ENCODE measurements at regions of chr1 and their contacts with region 1.

Region 1: DNA sequence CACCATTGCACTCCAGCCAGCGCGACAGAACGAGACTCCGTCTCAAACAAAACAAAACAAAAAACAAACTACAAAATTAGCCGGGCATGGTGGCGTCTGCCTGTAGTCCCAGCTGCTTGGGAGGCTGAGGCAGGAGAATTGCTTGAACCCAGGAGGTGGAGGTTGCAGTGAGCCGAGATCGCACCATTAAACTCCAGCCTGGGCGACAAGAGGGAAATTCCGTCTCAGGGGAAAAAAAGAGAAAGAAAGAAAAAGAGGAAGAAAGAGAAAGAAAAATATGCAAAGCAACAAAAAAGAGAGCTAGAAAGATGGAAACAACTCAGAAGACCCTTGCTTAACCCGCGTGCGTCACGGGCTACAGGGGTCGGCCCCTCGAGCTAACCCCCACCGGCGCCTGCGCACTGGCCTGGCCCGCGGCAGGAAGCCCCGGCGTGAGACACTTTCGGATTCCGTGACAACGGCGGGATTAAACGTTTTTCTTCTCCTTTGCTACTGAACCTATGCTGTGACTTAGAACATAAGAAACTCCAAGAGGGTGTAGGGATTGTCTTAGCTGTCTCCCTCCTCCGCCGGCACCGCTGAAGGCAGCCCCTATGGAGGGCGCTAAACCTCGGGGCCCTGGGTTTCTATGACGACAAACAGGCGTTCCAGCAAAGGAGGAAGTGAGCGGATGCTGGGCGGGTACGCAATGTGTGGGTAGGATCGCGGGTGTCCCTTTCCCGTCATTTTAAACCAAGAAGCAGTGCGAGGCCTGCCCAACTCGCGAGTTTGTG is at the start of gene AXDND1:
- DNase-seq: peak; percentile 96
- H3K4me3 Mint-ChIP-seq: peak within 1 kb of the TSS; percentile 96
- H3K27ac Mint-ChIP-seq: peak within 1 kb of the TSS; percentile 97
- H3K4me1 Mint-ChIP-seq: peaks cover 9% of the 10 kb centered on the region
- H3K27me3 Mint-ChIP-seq: peaks cover 4% of the 10 kb centered on the region
- total RNA-seq, gene AXDND1: 0.21 TPM in 1 of 2 replicates, not detected in the other

Region 2: DNA sequence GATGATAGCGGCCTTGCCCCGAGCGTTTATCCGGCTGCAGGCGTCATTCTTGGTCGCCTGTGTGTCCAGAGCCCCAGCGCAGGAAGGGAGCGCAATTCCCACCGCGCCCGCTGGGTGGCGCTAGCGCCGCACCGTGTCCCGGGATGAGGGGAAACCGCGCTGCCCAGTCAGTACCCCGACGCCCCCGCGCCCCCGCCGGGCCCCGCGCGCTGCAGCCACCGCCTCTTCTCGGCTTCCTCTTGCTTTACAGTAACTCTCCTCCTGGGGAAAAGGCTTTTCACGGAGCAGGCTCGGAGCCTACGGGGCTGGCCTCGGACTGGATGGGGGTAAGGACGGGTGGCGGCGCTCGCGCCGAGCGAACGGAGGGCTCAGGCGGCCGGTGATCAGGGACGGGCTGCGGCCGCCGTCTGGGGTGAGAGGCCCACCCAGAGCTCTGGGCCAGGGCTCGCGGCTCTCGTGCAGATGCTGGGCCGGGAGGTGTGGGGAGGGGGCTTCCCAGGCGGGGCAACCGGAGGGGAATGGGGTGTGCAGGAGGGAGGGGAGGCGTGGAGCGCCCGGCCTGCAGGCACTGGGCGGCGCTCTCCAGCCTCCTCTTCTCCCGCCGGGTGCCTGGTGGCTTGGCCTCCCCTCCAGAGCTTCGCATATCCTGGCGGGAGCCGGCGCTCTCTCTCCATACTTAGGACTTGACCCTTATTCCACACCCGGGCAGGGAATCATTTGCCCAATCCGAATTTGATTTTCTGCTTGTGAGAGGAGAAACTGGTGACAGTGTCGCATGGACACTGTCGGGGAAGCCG is 822.7 kb before region 1 on chr1:
- intact Hi-C with region 1: loop called (anchors 5 kb)
- DNase-seq: peak; percentile 97
- H3K4me3 Mint-ChIP-seq: peak overlapping the region; percentile 91
- H3K27ac Mint-ChIP-seq: peak overlapping the region; percentile 87
- H3K4me1 Mint-ChIP-seq: no peaks in the 10 kb centered on the region
- H3K27me3 Mint-ChIP-seq: no peaks in the 10 kb centered on the region

Region 3: DNA sequence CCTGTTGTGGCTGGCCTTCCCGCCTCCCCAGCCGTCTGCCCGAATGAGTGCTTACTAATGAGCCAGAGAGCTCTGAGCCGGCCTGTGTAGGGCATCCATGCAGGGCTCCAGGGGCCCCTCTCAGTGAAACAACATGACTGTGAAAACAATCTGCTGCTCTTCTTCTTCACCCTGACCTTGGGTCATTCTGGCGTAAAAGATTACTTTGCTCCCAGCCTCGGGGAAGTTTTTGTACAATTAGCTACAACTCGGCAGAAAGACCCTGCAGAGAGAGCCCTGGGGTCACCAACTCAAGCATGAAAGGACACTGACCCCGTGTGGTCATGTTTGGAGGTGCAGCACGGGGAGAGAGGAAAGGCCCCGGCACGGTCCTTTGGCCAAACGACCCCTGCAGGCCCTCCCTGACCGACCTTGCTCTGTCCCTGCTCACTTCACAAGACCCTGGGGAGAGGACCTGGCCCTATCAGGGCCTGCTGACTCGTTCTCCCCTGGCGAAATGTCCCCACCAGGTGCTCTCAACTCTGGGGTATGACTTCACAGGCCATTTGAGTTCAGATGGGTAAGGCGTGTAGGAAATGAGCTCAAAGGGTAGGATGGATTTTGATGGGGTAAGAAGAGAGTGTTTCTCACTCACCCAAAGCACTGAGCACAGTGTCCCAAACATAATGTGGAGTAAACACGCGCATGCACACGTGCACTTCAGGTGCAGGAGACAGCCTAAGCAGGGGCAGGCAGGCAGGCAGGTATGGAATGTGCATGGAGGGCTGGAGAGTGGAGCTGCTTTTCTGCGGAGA is 362.8 kb before region 1 on chr1:
- intact Hi-C with region 1: loop called (anchors 10 kb)
- DNase-seq: peak; percentile 90
- H3K4me3 Mint-ChIP-seq: no peak overlapping the region
- H3K27ac Mint-ChIP-seq: peak overlapping the region; percentile 21
- H3K4me1 Mint-ChIP-seq: peaks cover 6% of the 10 kb centered on the region
- H3K27me3 Mint-ChIP-seq: no peaks in the 10 kb centered on the region

Region 4: GRCh38 chr1:179121159-179121938 is 244.2 kb before region 1 on chr1:
- intact Hi-C with region 1: loop called (anchors 1 kb)
- DNase-seq: peak; percentile 83
- H3K4me3 Mint-ChIP-seq: no peak overlapping the region
- H3K27ac Mint-ChIP-seq: no peak overlapping the region
- H3K4me1 Mint-ChIP-seq: peaks cover 6% of the 10 kb centered on the region
- H3K27me3 Mint-ChIP-seq: no peaks in the 10 kb centered on the region

Region 5: GRCh38 chr1:179229214-179230140 is 136.0 kb before region 1 on chr1 and contains the start of gene ABL2:
- intact Hi-C with region 1: loop called (anchors 2 kb)
- DNase-seq: peak; percentile 88
- H3K4me3 Mint-ChIP-seq: peak within 1 kb of the TSS; percentile 90
- H3K27ac Mint-ChIP-seq: peak within 1 kb of the TSS; percentile 89
- H3K4me1 Mint-ChIP-seq: peaks cover 24% of the 10 kb centered on the region
- H3K27me3 Mint-ChIP-seq: peaks cover 4% of the 10 kb centered on the region
- total RNA-seq, gene ABL2: 9.9 and 11.1 TPM in 2 replicates

Region 6: DNA sequence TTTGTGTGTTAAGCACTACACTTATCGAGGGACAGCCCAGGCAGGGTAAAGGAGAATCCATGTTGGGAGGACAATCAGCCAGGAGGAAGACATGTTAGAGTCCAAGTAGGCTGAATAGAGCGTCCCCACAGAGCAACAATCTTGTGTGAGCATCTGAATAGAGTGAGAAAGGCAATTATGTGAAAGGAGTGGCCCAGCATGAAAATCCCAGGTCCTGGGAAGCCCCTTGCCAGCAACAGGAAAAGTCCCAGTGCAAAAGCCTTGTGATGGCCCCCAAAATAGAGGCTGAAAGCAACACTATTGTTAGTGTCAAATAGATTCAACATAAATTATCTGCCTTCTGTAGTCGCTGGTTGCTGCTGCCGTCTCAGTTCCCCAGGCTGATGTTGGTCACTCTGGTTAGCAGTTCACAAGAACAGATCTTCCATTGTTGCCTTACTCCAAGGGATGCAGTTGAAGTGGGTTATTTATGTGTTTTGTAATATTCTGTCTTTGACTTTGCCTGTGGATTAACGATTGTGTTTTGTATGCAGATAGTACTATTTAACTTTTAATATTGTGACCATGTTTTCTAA is 123.9 kb before region 1 on chr1:
- intact Hi-C with region 1: no loop called
- DNase-seq: no peak
- H3K4me3 Mint-ChIP-seq: no peak overlapping the region
- H3K27ac Mint-ChIP-seq: no peak overlapping the region
- H3K4me1 Mint-ChIP-seq: no peaks in the 10 kb centered on the region
- H3K27me3 Mint-ChIP-seq: peaks cover 3% of the 10 kb centered on the region

Region 7: DNA sequence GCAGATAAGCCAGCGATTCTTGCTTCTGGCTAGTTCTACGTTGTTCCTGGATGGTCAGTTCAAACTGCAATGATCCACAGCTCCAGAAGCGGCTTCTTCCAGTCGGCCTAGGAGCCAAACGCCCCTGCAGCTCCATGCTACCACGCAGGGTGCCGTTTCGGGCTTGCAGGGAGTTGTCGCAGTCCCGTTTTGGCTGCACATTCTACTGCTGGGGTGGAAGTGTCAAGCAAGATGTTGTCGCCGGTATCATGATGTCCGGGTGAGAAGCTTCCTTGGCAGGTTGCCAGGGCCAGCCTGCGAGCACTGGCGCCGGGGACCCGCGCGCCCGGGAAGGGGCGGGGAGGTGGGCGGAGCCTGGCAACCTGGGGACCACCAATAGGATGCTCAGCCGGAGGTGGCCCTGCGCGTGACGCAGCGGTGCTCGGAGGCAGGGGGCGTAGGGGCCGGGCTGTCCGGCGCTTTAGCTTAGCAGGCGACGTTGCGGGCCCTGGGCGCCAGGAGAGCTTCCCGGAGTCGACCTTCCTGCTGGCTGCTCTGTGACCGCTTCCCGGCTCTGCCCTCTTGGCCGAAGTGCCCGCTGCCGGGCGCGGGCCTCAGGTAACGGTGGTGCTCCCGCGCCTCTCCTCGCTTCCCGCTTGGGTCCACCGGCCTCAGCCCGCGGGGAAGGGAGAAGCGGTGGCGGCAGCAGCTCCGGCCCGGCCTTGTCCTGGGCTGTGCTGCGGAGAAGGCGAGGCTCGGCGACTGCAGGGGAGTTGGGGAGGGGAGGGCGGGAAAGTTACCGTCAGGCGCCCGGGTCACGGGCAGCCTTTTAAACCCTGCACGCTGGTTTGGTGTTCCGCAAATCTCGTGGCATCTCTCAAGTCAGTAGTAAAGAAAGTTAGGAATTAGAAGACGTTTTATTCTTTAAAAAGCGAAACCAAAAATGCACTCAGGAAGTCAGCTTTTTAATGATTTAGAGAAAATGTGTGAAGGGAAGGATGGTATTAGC is 71.9 kb before region 1 on chr1 and contains the start of gene SOAT1:
- intact Hi-C with region 1: loop called (anchors 1 kb)
- DNase-seq: peak; percentile 98
- H3K4me3 Mint-ChIP-seq: peak within 1 kb of the TSS; percentile 89
- H3K27ac Mint-ChIP-seq: peak within 1 kb of the TSS; percentile 83
- H3K4me1 Mint-ChIP-seq: peaks cover 33% of the 10 kb centered on the region
- H3K27me3 Mint-ChIP-seq: no peaks in the 10 kb centered on the region
- total RNA-seq, gene SOAT1: 52.2 and 54.4 TPM in 2 replicates